BJ (cell line): ENCODE measurements at regions of chr20 and their contacts with region 1.

Region 1: DNA sequence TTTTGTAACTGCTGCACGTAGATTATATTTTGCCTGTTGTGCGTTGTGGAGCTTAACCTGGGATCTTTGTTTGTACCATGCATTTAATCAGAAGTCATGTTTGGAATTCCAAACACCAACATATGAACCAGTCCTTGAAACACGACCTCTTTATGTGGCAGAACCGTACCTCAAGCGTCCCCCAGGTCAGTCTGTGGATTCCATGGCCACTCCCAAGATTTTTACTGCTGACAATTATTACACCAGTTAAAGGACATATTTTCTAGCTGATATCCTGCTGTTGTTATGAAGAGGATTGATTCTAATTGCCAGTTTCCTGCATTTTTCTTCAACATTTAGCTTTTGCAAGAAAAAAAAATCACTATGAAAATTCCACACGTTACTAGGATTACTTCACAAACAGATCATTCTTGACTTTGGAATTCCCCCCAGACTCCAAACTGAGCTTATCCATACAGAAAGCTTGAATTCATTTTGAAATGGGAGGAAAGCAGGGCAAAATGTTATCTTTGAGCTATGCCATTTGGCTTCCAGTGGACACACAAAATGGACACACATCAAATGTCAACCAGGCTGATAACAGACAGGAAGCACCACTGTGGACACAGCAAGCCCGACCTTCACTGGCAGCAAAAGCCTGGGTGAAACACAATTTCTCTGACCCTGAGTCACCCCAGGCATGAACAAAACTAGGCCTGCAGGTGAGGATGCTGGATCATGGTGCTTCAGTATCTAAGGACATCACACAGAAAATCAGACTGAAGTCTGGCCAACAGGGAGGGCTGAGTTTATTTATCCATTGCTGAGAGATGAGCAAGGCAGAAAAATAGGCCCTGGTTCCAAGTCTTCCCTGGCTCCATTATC is 542.9 kb upstream of the JAG1 start:
- DNase-seq: no peak
- H3K4me3 ChIP-seq: no peak overlapping the region
- H3K27me3 ChIP-seq: no peaks in the 10 kb centered on the region; the same call in 1 of the 2 replicates
- CTCF ChIP-seq: no peak

Region 2: GRCh38 chr20:11159728-11160127 is 57.0 kb before region 1 on chr20:
- CTCF ChIA-PET with region 1: no interaction called
- POLR2A ChIA-PET with region 1: no interaction called
- DNase-seq: peak; percentile 43
- H3K4me3 ChIP-seq: no peak overlapping the region
- H3K27me3 ChIP-seq: 0 out of 2 replicates have a peak, but pooled peaks cover 1% of the 10 kb centered on the region
- CTCF ChIP-seq: no peak

Region 3: GRCh38 chr20:11204926-11205768 is 11.5 kb before region 1 on chr20:
- CTCF ChIA-PET with region 1: interaction called, 12 read pairs
- POLR2A ChIA-PET with region 1: no interaction called
- DNase-seq: no peak
- H3K4me3 ChIP-seq: no peak overlapping the region
- H3K27me3 ChIP-seq: no peaks in the 10 kb centered on the region
- CTCF ChIP-seq: peak; percentile 76

Region 4: GRCh38 chr20:11235058-11235457 is 18.4 kb after region 1 on chr20:
- CTCF ChIA-PET with region 1: no interaction called
- POLR2A ChIA-PET with region 1: no interaction called
- DNase-seq: peak; percentile 31
- H3K4me3 ChIP-seq: no peak overlapping the region
- H3K27me3 ChIP-seq: no peaks in the 10 kb centered on the region
- CTCF ChIP-seq: no peak